GM12878 (cell line): ENCODE measurements at regions of chr15 and their contacts with region 1.

Region 1: GRCh38 chr15:41904541-41905005 is 10.7 kb upstream of the SPTBN5 start:
- DNase-seq: peak; percentile 21
- ATAC-seq: peak; percentile 96
- H3K4me3 ChIP-seq: no peak overlapping the region
- H3K27ac ChIP-seq: no peak overlapping the region
- H3K4me1 ChIP-seq: no peaks in the 10 kb centered on the region
- H3K27me3 ChIP-seq: no peaks in the 10 kb centered on the region
- CTCF ChIP-seq: peak; percentile 82 to 91 (median 86)
- EP300 ChIP-seq: no peak
- POLR2A ChIP-seq: no peak; the same call in none of the 2 replicates
- RAD21 ChIP-seq: peak; percentile 78

Region 2: GRCh38 chr15:40618023-40618422 is 1286.5 kb before region 1 on chr15:
- CTCF ChIA-PET with region 1: no interaction called
- POLR2A ChIA-PET with region 1: no interaction called
- RAD21 ChIA-PET with region 1: no interaction called
- SMC1A ChIA-PET with region 1: no interaction called
- in situ Hi-C with region 1: no loop called
- intact Hi-C with region 1: no loop called
- DNase-seq: no peak
- ATAC-seq: no peak
- H3K4me3 ChIP-seq: no peak overlapping the region
- H3K27ac ChIP-seq: no peak overlapping the region
- H3K4me1 ChIP-seq: no peaks in the 10 kb centered on the region
- H3K27me3 ChIP-seq: no peaks in the 10 kb centered on the region
- CTCF ChIP-seq: no peak
- EP300 ChIP-seq: no peak
- POLR2A ChIP-seq: no peak
- RAD21 ChIP-seq: no peak

Region 3: GRCh38 chr15:41779662-41780157 is 124.9 kb before region 1 on chr15:
- CTCF ChIA-PET with region 1: interaction called, 79 read pairs
- POLR2A ChIA-PET with region 1: no interaction called
- RAD21 ChIA-PET with region 1: interaction called, 69 read pairs
- SMC1A ChIA-PET with region 1: interaction called, 49 read pairs
- in situ Hi-C with region 1: no loop called
- intact Hi-C with region 1: loop called (anchors 1 kb)
- DNase-seq: no peak
- ATAC-seq: no peak; the same call in 2 of the 3 replicates
- H3K4me3 ChIP-seq: peak overlapping the region; percentile 47; the same call in 1 of the 2 replicates
- H3K27ac ChIP-seq: peak overlapping the region; percentile 7; the same call in 1 of the 2 replicates
- H3K4me1 ChIP-seq: peaks cover 17% of the 10 kb centered on the region
- H3K27me3 ChIP-seq: no peaks in the 10 kb centered on the region
- CTCF ChIP-seq: no peak
- EP300 ChIP-seq: no peak
- POLR2A ChIP-seq: no peak
- RAD21 ChIP-seq: no peak

Region 4: GRCh38 chr15:41827880-41828806 is 76.4 kb before region 1 on chr15 and contains the start of gene JMJD7:
- CTCF ChIA-PET with region 1: interaction called, 4 read pairs
- POLR2A ChIA-PET with region 1: no interaction called
- RAD21 ChIA-PET with region 1: interaction called, 4 read pairs
- SMC1A ChIA-PET with region 1: interaction called, 4 read pairs
- in situ Hi-C with region 1: no loop called
- intact Hi-C with region 1: loop called (anchors 5 kb)
- DNase-seq: peak; percentile 44
- ATAC-seq: peak; percentile 96
- H3K4me3 ChIP-seq: peak within 1 kb of the TSS; percentile 85
- H3K27ac ChIP-seq: 0 out of 2 replicates have a peak within 1 kb of the TSS, but pooled peaks have one; percentile 10
- H3K4me1 ChIP-seq: no peaks in the 10 kb centered on the region
- H3K27me3 ChIP-seq: no peaks in the 10 kb centered on the region
- CTCF ChIP-seq: no peak
- EP300 ChIP-seq: no peak
- POLR2A ChIP-seq: peak; percentile 84
- RAD21 ChIP-seq: no peak
- polyA plus RNA-seq, gene JMJD7: 0.79 to 2.2 TPM

Region 5: DNA sequence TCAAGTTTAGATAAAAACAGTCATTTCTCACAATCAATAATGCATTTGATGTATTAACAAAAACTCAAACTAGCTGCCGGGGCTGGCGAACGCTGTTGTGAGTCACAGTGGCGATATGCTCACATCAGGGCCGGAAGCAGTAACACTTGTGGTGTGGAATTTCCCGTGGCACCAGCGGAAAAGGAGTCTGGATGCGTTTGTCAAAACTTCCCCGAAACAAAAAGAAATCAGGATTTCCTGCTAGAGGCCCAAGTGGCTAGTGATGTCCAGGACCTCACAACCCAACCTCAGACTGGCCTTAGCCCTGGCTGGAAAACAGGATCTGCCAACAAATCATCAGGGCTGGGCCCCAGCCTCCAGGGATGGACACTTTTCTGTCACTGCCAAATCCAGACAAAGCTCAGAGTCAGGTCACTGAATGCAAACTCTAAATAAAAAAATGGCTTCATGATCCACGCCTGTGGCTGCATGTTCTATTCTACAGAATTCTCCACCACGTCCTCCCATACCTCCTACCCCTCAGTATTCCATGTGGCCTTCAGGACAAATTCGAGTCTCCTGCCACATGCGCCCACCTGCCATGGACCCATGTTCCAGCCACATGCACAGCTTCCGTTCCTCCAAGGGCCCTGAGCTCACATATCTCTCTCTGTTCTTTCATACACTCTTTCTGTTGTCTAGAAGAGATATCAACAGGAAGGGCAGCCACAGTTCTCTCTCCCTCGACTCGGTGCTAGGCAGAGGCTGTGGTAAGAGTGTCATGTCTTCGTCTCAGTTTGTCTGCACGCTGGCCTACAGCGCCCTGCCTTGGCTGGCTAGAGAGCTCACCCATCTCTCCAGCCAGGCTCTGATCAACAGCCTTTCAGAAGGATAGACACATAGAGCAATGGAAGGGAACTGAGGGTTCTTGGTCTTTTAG is 32.3 kb after region 1 on chr15:
- CTCF ChIA-PET with region 1: interaction called, 4 read pairs
- POLR2A ChIA-PET with region 1: no interaction called
- RAD21 ChIA-PET with region 1: interaction called, 5 read pairs
- SMC1A ChIA-PET with region 1: interaction called, 20 read pairs
- in situ Hi-C with region 1: no loop called
- intact Hi-C with region 1: no loop called
- DNase-seq: no peak
- ATAC-seq: peak; percentile 10; the same call in 1 of the 3 replicates
- H3K4me3 ChIP-seq: no peak overlapping the region
- H3K27ac ChIP-seq: peak overlapping the region; percentile 45
- H3K4me1 ChIP-seq: peaks cover 34% of the 10 kb centered on the region
- H3K27me3 ChIP-seq: no peaks in the 10 kb centered on the region
- CTCF ChIP-seq: peak; percentile 6 to 31 (median 29); a peak in 4 of 6 replicates
- EP300 ChIP-seq: no peak
- POLR2A ChIP-seq: peak; percentile 48; the same call in 1 of the 2 replicates
- RAD21 ChIP-seq: peak; percentile 30

Region 6: DNA sequence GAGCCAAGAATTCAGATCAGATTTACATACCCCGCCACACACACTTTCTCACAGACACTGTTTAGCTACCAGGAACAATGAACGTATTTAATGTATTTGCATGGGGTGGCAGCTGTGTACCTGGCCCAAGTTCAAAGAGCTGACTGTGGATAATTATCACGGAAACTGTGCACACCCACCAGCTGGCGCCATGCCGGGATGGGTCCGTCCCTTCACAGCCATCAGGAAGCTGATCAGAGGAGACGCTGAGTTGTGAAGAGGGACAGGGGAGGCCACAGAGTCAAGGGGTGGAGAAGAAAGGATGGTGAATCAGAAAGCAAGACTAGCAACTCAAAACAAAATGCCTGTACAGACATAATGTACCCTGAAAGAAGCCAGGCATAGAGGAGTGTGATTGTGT is 202.9 kb after region 1 on chr15:
- CTCF ChIA-PET with region 1: no interaction called
- POLR2A ChIA-PET with region 1: no interaction called
- RAD21 ChIA-PET with region 1: no interaction called
- SMC1A ChIA-PET with region 1: no interaction called
- in situ Hi-C with region 1: no loop called
- intact Hi-C with region 1: no loop called
- DNase-seq: no peak
- ATAC-seq: peak; percentile 47
- H3K4me3 ChIP-seq: no peak overlapping the region
- H3K27ac ChIP-seq: no peak overlapping the region
- H3K4me1 ChIP-seq: no peaks in the 10 kb centered on the region; the same call in none of the 2 replicates
- H3K27me3 ChIP-seq: no peaks in the 10 kb centered on the region
- CTCF ChIP-seq: no peak
- EP300 ChIP-seq: no peak
- POLR2A ChIP-seq: no peak
- RAD21 ChIP-seq: no peak